ENCODE measurements at regions of chr6 and their contacts with region 1.

Region 1: DNA sequence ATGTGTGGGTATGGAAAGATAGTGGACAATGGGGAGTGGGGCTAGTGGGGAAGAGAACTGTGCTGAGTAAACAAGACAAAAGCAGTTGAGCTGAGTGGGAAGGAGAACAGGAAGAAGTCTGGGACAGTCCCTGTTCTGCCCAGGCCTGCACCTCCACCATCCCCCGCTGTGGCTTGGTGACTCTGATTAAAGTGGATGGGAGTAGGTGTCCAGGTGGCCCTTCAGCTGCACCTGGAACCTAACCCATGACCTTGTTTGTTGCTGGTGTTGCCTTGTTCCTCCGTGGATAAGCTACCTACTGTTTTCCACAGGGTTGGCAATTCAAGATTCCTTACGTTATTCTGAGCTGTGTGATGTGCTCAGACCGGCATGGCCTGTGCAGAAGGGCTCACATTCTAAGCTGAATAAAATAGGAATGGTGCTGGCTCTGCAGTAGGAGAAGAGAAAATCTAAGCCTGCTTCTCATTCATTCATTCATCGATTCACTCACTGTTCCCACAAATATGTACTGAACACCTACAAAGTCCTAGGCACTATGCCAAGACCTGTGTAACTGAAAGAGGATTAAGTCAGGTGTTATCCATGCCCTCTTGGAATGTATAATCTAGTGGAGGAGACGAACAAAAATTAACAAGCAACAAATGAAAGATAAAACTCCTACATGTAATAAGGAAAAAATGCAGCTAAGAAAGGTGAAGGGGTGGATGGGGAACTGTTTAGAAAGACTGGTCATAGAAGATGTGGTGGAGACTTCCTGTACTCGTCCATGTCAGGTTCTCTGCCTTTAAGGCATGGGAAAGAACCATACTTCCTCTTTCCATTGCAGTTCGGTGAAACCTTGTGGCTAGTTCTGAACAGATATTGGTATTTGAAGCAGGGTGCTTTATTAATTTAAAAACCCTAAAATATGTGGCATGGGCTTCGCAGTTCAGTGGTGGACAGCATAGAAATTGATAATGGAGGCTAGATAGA is 10.1 kb upstream of the CALHM6 start:
- DNase-seq: no peak
- H3K4me3 Mint-ChIP-seq: no peak overlapping the region
- H3K27ac Mint-ChIP-seq: no peak overlapping the region
- H3K4me1 Mint-ChIP-seq: peaks cover 23% of the 10 kb centered on the region
- H3K27me3 Mint-ChIP-seq: peaks cover 32% of the 10 kb centered on the region

Region 2: GRCh38 chr6:116476002-116476678 is 25.1 kb after region 1 on chr6:
- intact Hi-C with region 1: loop called (anchors 1 kb)
- DNase-seq: peak; percentile 54
- H3K4me3 Mint-ChIP-seq: peak overlapping the region; percentile 20
- H3K27ac Mint-ChIP-seq: peak overlapping the region; percentile 4
- H3K4me1 Mint-ChIP-seq: peaks cover 26% of the 10 kb centered on the region
- H3K27me3 Mint-ChIP-seq: peaks cover 40% of the 10 kb centered on the region

Region 3: GRCh38 chr6:116726947-116727346 is 275.9 kb after region 1 on chr6:
- intact Hi-C with region 1: no loop called
- DNase-seq: no peak
- H3K4me3 Mint-ChIP-seq: no peak overlapping the region
- H3K27ac Mint-ChIP-seq: no peak overlapping the region
- H3K4me1 Mint-ChIP-seq: no peaks in the 10 kb centered on the region
- H3K27me3 Mint-ChIP-seq: no peaks in the 10 kb centered on the region

Measured in activated T-helper 2 cell treated with anti-CD3 and anti-CD28 coated beads, Interferon-gamma antibody, Interleukin-2, Interleukin-4, amounts not matched to agents 10 μg/mL and 5 μg/mL and 100 μg/mL, durations not matched to agents 14 hours and 24 hours and 36 hours (primary cell).